Activated T-helper 2 cell treated with anti-CD3 and anti-CD28 coated beads, Interferon-gamma antibody, Interleukin-2, Interleukin-4, amounts not matched to agents 10 μg/mL and 5 μg/mL and 100 μg/mL, durations not matched to agents 14 hours and 24 hours and 36 hours (primary cell): ENCODE measurements at regions of chr1 and their contacts with region 1.

Region 1: GRCh38 chr1:155017041-155017945 is 14.7 kb downstream of the ZBTB7B start:
- DNase-seq: peak; percentile 82
- H3K4me3 Mint-ChIP-seq: no peak overlapping the region
- H3K27ac Mint-ChIP-seq: peak overlapping the region; percentile 22
- H3K4me1 Mint-ChIP-seq: peaks cover 51% of the 10 kb centered on the region
- H3K27me3 Mint-ChIP-seq: no peaks in the 10 kb centered on the region

Region 2: GRCh38 chr1:154982897-154983648 is 34.2 kb before region 1 on chr1 and contains the start of gene FLAD1:
- intact Hi-C with region 1: loop called (anchors 1 kb)
- DNase-seq: peak; percentile 97
- H3K4me3 Mint-ChIP-seq: no peak within 1 kb of the TSS
- H3K27ac Mint-ChIP-seq: no peak within 1 kb of the TSS
- H3K4me1 Mint-ChIP-seq: peaks cover 6% of the 10 kb centered on the region
- H3K27me3 Mint-ChIP-seq: no peaks in the 10 kb centered on the region
- total RNA-seq, gene FLAD1: 54.9 and 60.2 TPM in 2 replicates

Region 3: GRCh38 chr1:155050560-155051341 is 33.5 kb after region 1 on chr1 and contains the start of gene ADAM15:
- intact Hi-C with region 1: loop called (anchors 2 kb)
- DNase-seq: peak; percentile 75
- H3K4me3 Mint-ChIP-seq: peak within 1 kb of the TSS; percentile 84
- H3K27ac Mint-ChIP-seq: peak within 1 kb of the TSS; percentile 79
- H3K4me1 Mint-ChIP-seq: peaks cover 24% of the 10 kb centered on the region
- H3K27me3 Mint-ChIP-seq: no peaks in the 10 kb centered on the region
- total RNA-seq, gene ADAM15: 72.0 and 74.8 TPM in 2 replicates

Region 4: GRCh38 chr1:155250633-155251449 is 233.5 kb after region 1 on chr1:
- intact Hi-C with region 1: no loop called
- DNase-seq: peak; percentile 91
- H3K4me3 Mint-ChIP-seq: peak overlapping the region; percentile 58
- H3K27ac Mint-ChIP-seq: no peak overlapping the region
- H3K4me1 Mint-ChIP-seq: peaks cover 23% of the 10 kb centered on the region
- H3K27me3 Mint-ChIP-seq: no peaks in the 10 kb centered on the region